HepG2 (cell line): ENCODE measurements at regions of chr2 and their contacts with region 1.

Region 1: GRCh38 chr2:171811245-171811628 is 82.8 kb downstream of the SLC25A12 start:
- DNase-seq: peak; percentile 26
- ATAC-seq: no peak
- H3K4me3 ChIP-seq: no peak overlapping the region
- H3K27ac ChIP-seq: no peak overlapping the region
- H3K4me1 ChIP-seq: peaks cover 24% of the 10 kb centered on the region
- H3K27me3 ChIP-seq: no peaks in the 10 kb centered on the region
- CTCF ChIP-seq: peak; percentile 74
- EP300 ChIP-seq: no peak
- POLR2A ChIP-seq: no peak
- RAD21 ChIP-seq: peak; percentile 54; the same call in 1 of the 2 replicates

Region 2: GRCh38 chr2:171723724-171724683 is 87.2 kb before region 1 on chr2:
- CTCF ChIA-PET with region 1: no interaction called
- POLR2A ChIA-PET with region 1: no interaction called
- in situ Hi-C with region 1: no loop called
- intact Hi-C with region 1: loop called (anchors 5 kb)
- DNase-seq: peak; percentile 12
- ATAC-seq: peak; percentile 75
- H3K4me3 ChIP-seq: no peak overlapping the region
- H3K27ac ChIP-seq: no peak overlapping the region
- H3K4me1 ChIP-seq: peaks cover 23% of the 10 kb centered on the region
- H3K27me3 ChIP-seq: no peaks in the 10 kb centered on the region
- CTCF ChIP-seq: peak; percentile 60
- EP300 ChIP-seq: no peak
- POLR2A ChIP-seq: no peak
- RAD21 ChIP-seq: peak; percentile 26; the same call in 1 of the 2 replicates

Region 3: GRCh38 chr2:171778515-171778914 is 32.7 kb before region 1 on chr2:
- CTCF ChIA-PET with region 1: no interaction called
- POLR2A ChIA-PET with region 1: no interaction called
- in situ Hi-C with region 1: no loop called
- intact Hi-C with region 1: no loop called
- DNase-seq: no peak
- ATAC-seq: no peak
- H3K4me3 ChIP-seq: no peak overlapping the region
- H3K27ac ChIP-seq: no peak overlapping the region
- H3K4me1 ChIP-seq: peaks cover 6% of the 10 kb centered on the region; the same call in 1 of the 2 replicates
- H3K27me3 ChIP-seq: no peaks in the 10 kb centered on the region
- CTCF ChIP-seq: no peak
- EP300 ChIP-seq: no peak
- POLR2A ChIP-seq: no peak
- RAD21 ChIP-seq: no peak

Region 4: GRCh38 chr2:171878481-171878993 is 67.3 kb after region 1 on chr2:
- CTCF ChIA-PET with region 1: no interaction called
- POLR2A ChIA-PET with region 1: no interaction called
- in situ Hi-C with region 1: no loop called
- intact Hi-C with region 1: loop called (anchors 10 kb)
- DNase-seq: peak; percentile 56
- ATAC-seq: peak; percentile 87
- H3K4me3 ChIP-seq: peak overlapping the region in 1 of 3 experiments; percentile 2; a peak in 1 of 6 replicates
- H3K27ac ChIP-seq: peak overlapping the region; percentile 48
- H3K4me1 ChIP-seq: peaks cover 17% of the 10 kb centered on the region
- H3K27me3 ChIP-seq: no peaks in the 10 kb centered on the region
- CTCF ChIP-seq: no peak
- EP300 ChIP-seq: no peak
- POLR2A ChIP-seq: no peak
- RAD21 ChIP-seq: no peak

Region 5: GRCh38 chr2:171922230-171923022 is 111.2 kb after region 1 on chr2 and contains the start of gene HAT1:
- CTCF ChIA-PET with region 1: no interaction called
- POLR2A ChIA-PET with region 1: no interaction called
- in situ Hi-C with region 1: no loop called
- intact Hi-C with region 1: loop called (anchors 5 kb)
- DNase-seq: peak; percentile 94
- ATAC-seq: peak; percentile 94
- H3K4me3 ChIP-seq: peak within 1 kb of the TSS; percentile 87 to 95 (median 87)
- H3K27ac ChIP-seq: peak within 1 kb of the TSS; percentile 83
- H3K4me1 ChIP-seq: peaks cover 32% of the 10 kb centered on the region
- H3K27me3 ChIP-seq: peaks cover 0 to 3% of the 10 kb centered on the region in 2 experiments; a peak in 1 of 5 replicates
- CTCF ChIP-seq: no peak
- EP300 ChIP-seq: peak; percentile 3 to 7; a peak in 2 of 4 replicates
- POLR2A ChIP-seq: peak in 1 of 2 experiments; percentile 81; a peak in 3 of 4 replicates
- RAD21 ChIP-seq: 0 out of 2 replicates have a peak, but pooled peaks have one; percentile 40
- total RNA-seq, gene HAT1: 119 and 195 TPM in 2 replicates